ENCODE measurements at regions of chr13 and their contacts with region 1.

Region 1: GRCh38 chr13:101098873-101099272 is 317.4 kb downstream of the NALCN start:
- DNase-seq: no peak
- H3K4me3 Mint-ChIP-seq: no peak overlapping the region
- H3K27ac Mint-ChIP-seq: no peak overlapping the region
- H3K4me1 Mint-ChIP-seq: no peaks in the 10 kb centered on the region
- H3K27me3 Mint-ChIP-seq: no peaks in the 10 kb centered on the region
- CTCF ChIP-seq: no peak

Region 2: DNA sequence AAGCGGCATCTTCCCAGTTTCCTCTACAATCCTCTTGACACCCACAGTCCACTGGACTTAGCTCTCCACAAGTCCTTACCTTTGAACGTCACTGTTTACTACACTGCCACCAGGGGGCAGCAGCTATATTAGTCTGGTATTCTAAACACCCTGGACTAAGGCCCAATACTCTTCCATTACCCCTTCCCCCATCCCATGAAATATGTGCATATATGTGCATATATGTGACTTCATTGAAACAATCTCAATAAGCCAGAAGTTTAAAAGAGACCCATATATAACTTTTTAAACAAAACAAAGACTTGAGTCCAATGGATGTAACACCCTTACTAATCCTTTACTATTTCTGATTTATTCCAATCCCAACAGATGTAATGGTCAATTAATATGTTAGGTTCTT is 525.8 kb before region 1 on chr13:
- CTCF ChIA-PET with region 1: interaction called, 5 read pairs
- POLR2A ChIA-PET with region 1: no interaction called
- intact Hi-C with region 1: loop called (anchors 5 kb)
- DNase-seq: peak; percentile 83
- H3K4me3 Mint-ChIP-seq: no peak overlapping the region
- H3K27ac Mint-ChIP-seq: no peak overlapping the region
- H3K4me1 Mint-ChIP-seq: no peaks in the 10 kb centered on the region
- H3K27me3 Mint-ChIP-seq: no peaks in the 10 kb centered on the region
- CTCF ChIP-seq: peak; percentile 64

Region 3: GRCh38 chr13:100674848-100675660 is 423.8 kb before region 1 on chr13:
- CTCF ChIA-PET with region 1: no interaction called
- POLR2A ChIA-PET with region 1: no interaction called
- intact Hi-C with region 1: loop called (anchors 1 kb)
- DNase-seq: peak; percentile 97
- H3K4me3 Mint-ChIP-seq: peak overlapping the region; percentile 85
- H3K27ac Mint-ChIP-seq: peak overlapping the region; percentile 28
- H3K4me1 Mint-ChIP-seq: peaks cover 19% of the 10 kb centered on the region
- H3K27me3 Mint-ChIP-seq: no peaks in the 10 kb centered on the region
- CTCF ChIP-seq: no peak

Region 4: DNA sequence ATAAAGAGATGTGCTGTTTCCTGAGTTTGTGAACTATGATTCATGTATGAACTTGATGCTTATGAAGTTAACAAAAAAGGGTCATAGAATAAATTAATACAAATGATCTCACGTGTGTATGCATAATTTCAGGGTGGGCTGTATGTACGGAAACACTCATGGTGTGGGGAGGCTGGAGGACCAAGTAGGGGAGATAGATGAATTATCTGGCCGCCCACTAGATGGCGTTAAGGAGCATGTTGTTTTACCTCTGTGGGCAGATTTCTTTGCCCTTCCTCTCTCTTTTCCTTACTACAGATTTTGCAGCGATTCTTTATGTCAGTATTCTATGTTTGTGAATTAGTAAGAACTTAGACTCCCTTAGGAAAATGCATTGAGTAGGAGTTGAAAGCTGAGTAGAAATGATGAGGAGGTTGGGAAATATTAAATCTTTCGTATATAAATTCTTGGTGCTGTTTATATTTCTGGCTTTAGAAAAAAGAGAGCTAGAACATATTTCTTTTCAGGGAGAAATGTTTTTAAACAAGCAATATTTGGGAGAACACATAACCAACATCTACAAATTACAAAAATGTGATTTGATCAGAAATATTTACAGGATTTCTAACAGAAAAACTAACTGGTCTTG is 376.9 kb before region 1 on chr13:
- CTCF ChIA-PET with region 1: interaction called, 23 read pairs
- POLR2A ChIA-PET with region 1: no interaction called
- intact Hi-C with region 1: loop called (anchors 1 kb)
- DNase-seq: peak; percentile 72
- H3K4me3 Mint-ChIP-seq: no peak overlapping the region
- H3K27ac Mint-ChIP-seq: no peak overlapping the region
- H3K4me1 Mint-ChIP-seq: no peaks in the 10 kb centered on the region
- H3K27me3 Mint-ChIP-seq: no peaks in the 10 kb centered on the region
- CTCF ChIP-seq: peak; percentile 58

Region 5: DNA sequence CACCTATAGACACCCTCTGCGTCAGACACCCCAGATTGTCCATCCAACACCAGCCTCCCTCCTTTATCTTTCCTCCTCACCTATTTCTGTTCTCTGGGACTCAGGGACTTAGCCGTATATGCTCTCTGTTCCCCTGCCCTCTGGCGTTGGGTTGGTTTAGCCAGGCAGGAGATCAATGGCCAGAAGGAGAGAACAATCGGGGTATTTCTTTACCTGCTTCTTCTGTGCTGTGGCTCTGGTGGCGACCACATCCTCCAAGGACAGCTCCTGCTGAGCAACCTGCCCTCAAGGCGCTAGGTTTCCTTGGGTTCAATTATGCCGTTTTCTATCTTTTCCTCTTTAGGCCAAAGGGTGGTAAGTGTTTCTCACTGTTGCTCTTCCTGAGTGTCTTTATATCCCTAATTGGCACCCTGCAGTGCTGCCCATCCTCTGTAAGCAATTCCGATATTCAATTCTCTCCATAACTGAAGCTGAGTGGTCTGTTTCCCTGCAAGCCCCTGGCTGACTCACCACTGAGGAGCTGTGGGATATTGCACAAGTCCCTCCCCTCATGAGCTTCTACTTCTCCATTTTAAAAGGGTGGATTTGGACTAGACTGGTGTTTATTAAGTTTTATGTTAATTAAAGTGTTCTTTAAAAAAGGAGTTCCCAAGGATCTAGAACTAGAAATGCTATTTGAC is 360.6 kb before region 1 on chr13:
- CTCF ChIA-PET with region 1: interaction called, 3 read pairs
- POLR2A ChIA-PET with region 1: no interaction called
- intact Hi-C with region 1: loop called (anchors 5 kb)
- DNase-seq: no peak
- H3K4me3 Mint-ChIP-seq: no peak overlapping the region
- H3K27ac Mint-ChIP-seq: no peak overlapping the region
- H3K4me1 Mint-ChIP-seq: no peaks in the 10 kb centered on the region
- H3K27me3 Mint-ChIP-seq: no peaks in the 10 kb centered on the region
- CTCF ChIP-seq: no peak

Region 6: GRCh38 chr13:101013245-101013644 is 85.6 kb before region 1 on chr13:
- CTCF ChIA-PET with region 1: interaction called, 6 read pairs
- POLR2A ChIA-PET with region 1: no interaction called
- intact Hi-C with region 1: loop called (anchors 1 kb)
- DNase-seq: no peak
- H3K4me3 Mint-ChIP-seq: no peak overlapping the region
- H3K27ac Mint-ChIP-seq: no peak overlapping the region
- H3K4me1 Mint-ChIP-seq: peaks cover under 1% of the 10 kb centered on the region
- H3K27me3 Mint-ChIP-seq: no peaks in the 10 kb centered on the region
- CTCF ChIP-seq: no peak

Region 7: DNA sequence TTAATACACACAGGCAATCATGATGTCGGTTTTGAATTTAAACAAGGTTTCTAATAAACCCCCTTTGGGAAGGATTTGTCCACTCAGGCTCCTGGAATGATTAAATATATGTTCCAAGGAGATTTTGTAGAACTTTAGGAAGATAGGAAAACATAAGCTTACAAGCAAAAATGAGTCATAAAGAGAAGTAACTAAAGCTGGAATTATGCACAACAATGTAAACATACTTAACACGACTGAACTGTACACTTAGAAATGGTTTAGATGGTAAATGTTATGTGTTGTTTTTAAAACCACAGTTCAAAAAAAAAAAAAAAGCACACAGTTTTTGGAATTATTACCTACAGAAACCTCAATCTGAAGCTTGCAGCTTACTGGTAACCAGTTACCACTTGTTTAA is 13.0 kb after region 1 on chr13:
- CTCF ChIA-PET with region 1: interaction called, 10 read pairs
- POLR2A ChIA-PET with region 1: no interaction called
- intact Hi-C with region 1: no loop called
- DNase-seq: no peak
- H3K4me3 Mint-ChIP-seq: no peak overlapping the region
- H3K27ac Mint-ChIP-seq: no peak overlapping the region
- H3K4me1 Mint-ChIP-seq: no peaks in the 10 kb centered on the region
- H3K27me3 Mint-ChIP-seq: no peaks in the 10 kb centered on the region
- CTCF ChIP-seq: no peak

Region 8: DNA sequence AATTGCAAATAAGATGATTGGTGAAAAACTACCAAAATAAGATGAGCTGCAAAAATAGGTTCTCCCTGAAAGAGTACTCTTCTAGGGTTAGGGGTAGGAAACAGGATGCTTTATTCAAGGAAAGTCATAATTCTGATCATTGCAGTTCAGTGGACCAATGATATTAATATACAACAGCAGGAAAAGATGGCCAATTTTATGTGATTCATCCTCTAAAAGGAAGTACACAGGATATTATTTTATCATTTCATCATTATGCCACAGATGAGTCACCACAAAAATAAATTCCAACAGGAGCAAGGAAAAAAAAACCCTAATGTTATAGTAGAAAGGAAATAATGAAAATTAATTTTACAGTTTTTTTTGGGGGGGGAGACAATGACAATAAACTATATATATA is 112.4 kb after region 1 on chr13:
- CTCF ChIA-PET with region 1: no interaction called
- POLR2A ChIA-PET with region 1: no interaction called
- intact Hi-C with region 1: no loop called
- DNase-seq: peak; percentile 67
- H3K4me3 Mint-ChIP-seq: no peak overlapping the region
- H3K27ac Mint-ChIP-seq: peak overlapping the region; percentile 57
- H3K4me1 Mint-ChIP-seq: peaks cover 21% of the 10 kb centered on the region
- H3K27me3 Mint-ChIP-seq: no peaks in the 10 kb centered on the region
- CTCF ChIP-seq: no peak

Measured in MCF 10A (cell line).